Body of pancreas (tissue), 4 donors: ENCODE measurements at regions of chr12 and their contacts with region 1.

Region 1: DNA sequence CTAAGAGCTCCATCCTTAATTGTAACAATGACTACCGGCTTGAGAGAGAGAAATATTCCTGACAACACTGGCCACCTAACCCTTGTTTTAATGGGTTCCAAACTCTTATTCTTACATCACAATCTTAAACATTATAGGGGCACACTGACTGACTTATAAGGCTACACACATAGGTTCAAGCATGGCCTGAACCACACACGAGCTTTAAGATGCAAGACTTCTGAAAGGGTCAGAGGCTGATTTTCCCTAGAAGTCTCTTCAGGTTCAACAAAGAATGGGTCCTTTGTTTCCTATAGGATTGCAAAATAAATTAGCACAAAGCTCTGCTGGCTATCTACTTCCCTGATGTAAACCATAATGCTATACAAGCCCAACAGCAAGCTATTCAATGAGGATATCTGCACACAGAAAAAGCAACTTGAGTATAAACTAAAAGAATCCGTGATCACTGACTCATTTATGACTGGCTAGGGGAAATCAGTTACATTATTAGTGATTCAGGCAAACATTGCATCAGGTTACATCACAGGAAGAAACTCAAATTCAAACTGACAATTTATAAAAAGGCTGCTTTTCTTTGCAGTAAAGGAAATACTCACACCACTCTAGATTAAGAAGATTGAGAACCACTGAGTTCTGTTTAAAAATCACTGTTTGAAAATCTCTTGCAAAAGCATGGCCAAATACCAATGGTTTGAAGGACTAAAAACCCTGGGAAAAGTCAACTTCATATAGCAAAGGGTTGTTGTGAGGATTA is 8.5 kb downstream of the BTG1 start:
- DNase-seq: no peak
- ATAC-seq: peak; percentile 19
- H3K4me3 ChIP-seq: no peak overlapping the region
- H3K27ac ChIP-seq: peak overlapping the region; percentile 18 to 100 (median 84)
- H3K4me1 ChIP-seq: peaks cover 72% of the 10 kb centered on the region
- H3K27me3 ChIP-seq: no peaks in the 10 kb centered on the region
- CTCF ChIP-seq: no peak
- POLR2A ChIP-seq: no peak

Region 2: DNA sequence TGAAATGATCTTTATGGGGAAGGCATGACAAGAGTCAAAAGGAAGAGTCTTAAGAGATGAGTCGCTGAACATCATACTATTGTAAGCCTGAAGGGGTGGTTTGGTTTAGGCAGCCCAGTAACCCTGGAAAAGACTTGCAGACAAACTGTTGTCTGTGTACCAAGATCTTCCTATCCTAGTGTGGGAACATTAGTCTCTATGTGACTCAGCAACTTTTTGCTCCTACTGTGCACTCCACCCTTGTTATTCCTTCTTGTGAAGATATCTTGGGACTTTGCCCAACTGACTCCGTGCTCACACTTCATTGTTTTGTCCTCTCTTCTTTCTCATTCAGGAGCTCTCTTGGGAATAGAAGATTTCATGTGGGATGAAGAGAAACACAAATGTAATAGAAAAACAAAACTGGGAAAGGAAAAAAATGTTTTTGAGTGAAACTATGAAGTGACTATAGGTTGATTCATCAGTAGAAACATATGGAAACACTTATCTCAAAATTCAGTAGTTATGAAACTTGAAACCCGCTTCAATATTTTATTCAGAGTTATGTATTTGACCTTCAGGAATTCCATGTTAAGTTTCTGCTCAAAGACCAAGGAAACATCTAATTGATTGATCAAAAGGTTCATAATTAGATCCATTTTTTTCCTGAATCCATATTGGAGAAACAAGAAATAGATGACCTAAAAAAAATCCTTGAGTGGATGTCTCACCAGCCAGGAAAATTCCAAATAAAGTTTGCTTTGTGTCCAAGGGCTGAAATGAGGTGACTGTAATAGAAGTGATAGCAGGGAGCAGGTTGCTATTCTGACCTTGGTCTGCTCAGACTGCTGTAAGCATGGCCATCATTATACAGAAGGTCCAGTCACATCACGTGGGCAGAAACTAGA is 58.7 kb before region 1 on chr12:
- intact Hi-C with region 1: loop called (anchors 10 kb)
- DNase-seq: no peak
- ATAC-seq: peak; percentile 36
- H3K4me3 ChIP-seq: no peak overlapping the region
- H3K27ac ChIP-seq: peak overlapping the region in 3 of 4 donors; percentile 13 to 51 (median 42)
- H3K4me1 ChIP-seq: peaks cover 50% of the 10 kb centered on the region
- H3K27me3 ChIP-seq: no peaks in the 10 kb centered on the region
- CTCF ChIP-seq: no peak
- POLR2A ChIP-seq: no peak

Region 3: DNA sequence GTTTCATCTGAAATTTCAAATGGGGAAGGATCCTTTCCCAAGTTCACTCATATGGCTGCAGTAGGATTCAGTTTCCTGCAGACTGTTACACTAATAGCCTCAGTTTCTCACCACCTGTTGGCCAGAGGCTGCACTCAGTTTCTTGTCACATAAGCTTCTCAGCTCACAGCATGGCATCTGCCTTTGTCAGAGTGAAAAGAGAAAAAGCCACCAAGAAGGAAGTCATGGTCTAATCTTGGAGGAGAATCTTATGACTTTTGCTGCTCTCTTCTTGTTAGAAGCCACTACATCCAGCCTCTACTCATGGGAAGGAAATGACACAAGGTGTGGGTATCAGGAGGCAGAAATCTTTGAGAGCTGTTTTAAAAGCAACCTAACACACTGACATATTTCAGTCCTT is 47.9 kb after region 1 on chr12:
- intact Hi-C with region 1: no loop called
- DNase-seq: no peak
- ATAC-seq: no peak
- H3K4me3 ChIP-seq: no peak overlapping the region
- H3K27ac ChIP-seq: no peak overlapping the region
- H3K4me1 ChIP-seq: no peaks in the 10 kb centered on the region
- H3K27me3 ChIP-seq: no peaks in the 10 kb centered on the region
- CTCF ChIP-seq: no peak
- POLR2A ChIP-seq: no peak